Heart right ventricle (tissue), 16 donors: ENCODE measurements at regions of chr3 and their contacts with region 1.

Region 1: GRCh38 chr3:183766745-183767606 is 58.4 kb downstream of the MAP6D1 start:
- DNase-seq: peak; percentile 42 to 77
- ATAC-seq: peak; percentile 77 to 94 (median 92)
- H3K4me3 ChIP-seq: no peak overlapping the region
- H3K27ac ChIP-seq: peak overlapping the region in 1 of 10 donors; percentile 7
- H3K4me1 ChIP-seq: peaks cover 0 to 19% (median 7%) of the 10 kb centered on the region in 9 donors
- H3K27me3 ChIP-seq: no peaks in the 10 kb centered on the region
- CTCF ChIP-seq: peak; percentile 67 to 92 (median 84)

Region 2: DNA sequence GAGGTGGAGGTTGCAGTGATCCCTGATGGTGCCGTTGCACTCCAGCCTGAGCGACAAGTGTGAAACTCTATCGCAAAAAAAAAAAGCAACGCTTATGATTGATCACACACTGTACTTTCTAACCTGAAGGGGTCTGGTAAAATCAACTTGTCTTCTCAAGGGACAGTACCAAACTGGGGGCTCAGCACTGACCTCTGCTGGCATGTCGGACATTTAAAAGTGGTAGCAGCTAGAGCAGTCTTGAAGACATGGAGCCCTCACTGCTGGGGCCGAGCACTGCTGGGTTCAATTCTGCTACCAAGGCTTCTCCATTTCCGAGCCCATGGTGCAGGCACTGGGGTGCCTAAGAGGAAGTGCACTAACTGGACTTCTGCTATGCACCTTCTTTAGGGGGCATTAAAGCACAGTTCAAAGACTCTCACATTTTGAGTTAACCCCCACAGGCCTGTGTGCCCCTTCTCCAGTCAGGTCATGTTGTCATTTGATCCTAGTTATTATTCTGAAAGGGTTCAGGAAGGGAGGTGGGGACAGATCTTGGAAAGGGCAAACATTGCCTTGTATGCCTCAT is 578.0 kb before region 1 on chr3:
- intact Hi-C with region 1: loop called in 1 of 10 experiments (anchors 10 kb)
- DNase-seq: peak in 1 of 2 donors; percentile 44
- ATAC-seq: peak in 5 of 8 donors; percentile 27 to 59 (median 41)
- H3K4me3 ChIP-seq: no peak overlapping the region
- H3K27ac ChIP-seq: no peak overlapping the region
- H3K4me1 ChIP-seq: peaks cover 0 to 20% (median 0%) of the 10 kb centered on the region in 9 donors
- H3K27me3 ChIP-seq: peaks cover 0 to 4% (median 0%) of the 10 kb centered on the region in 7 donors
- CTCF ChIP-seq: peak in 7 of 9 donors; percentile 29 to 60 (median 43)

Region 3: DNA sequence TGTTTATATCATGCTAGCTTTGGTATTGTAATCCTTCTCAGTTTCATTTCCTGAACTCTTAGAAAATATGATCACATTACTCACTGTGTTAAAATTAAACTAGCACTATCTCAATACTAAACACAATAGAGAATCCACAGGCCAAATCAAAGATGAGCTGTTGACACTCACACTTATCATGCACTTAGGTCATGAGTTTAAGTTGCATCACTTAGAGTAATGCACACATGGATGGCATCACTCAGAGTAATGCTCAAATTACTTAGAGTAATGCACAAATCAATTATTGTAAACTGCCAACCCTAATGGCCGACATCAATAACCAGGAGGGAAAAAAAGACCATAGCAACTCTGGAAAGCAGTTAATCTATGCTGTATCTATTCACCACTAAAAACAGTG is 298.6 kb before region 1 on chr3:
- intact Hi-C with region 1: loop called (anchors 1 to 5 kb)
- DNase-seq: no peak
- ATAC-seq: peak in 1 of 8 donors; percentile 45
- H3K4me3 ChIP-seq: no peak overlapping the region
- H3K27ac ChIP-seq: no peak overlapping the region
- H3K4me1 ChIP-seq: peaks cover 0 to 15% (median 3%) of the 10 kb centered on the region in 9 donors
- H3K27me3 ChIP-seq: no peaks in the 10 kb centered on the region
- CTCF ChIP-seq: no peak

Region 4: GRCh38 chr3:183490670-183491069 is 276.3 kb before region 1 on chr3:
- intact Hi-C with region 1: loop called in 1 of 10 experiments (anchors 10 kb)
- DNase-seq: no peak
- ATAC-seq: peak in 1 of 8 donors; percentile 52
- H3K4me3 ChIP-seq: no peak overlapping the region
- H3K27ac ChIP-seq: peak overlapping the region in 1 of 10 donors; percentile 20
- H3K4me1 ChIP-seq: peaks cover 0 to 19% (median 12%) of the 10 kb centered on the region in 9 donors
- H3K27me3 ChIP-seq: no peaks in the 10 kb centered on the region
- CTCF ChIP-seq: no peak

Region 5: DNA sequence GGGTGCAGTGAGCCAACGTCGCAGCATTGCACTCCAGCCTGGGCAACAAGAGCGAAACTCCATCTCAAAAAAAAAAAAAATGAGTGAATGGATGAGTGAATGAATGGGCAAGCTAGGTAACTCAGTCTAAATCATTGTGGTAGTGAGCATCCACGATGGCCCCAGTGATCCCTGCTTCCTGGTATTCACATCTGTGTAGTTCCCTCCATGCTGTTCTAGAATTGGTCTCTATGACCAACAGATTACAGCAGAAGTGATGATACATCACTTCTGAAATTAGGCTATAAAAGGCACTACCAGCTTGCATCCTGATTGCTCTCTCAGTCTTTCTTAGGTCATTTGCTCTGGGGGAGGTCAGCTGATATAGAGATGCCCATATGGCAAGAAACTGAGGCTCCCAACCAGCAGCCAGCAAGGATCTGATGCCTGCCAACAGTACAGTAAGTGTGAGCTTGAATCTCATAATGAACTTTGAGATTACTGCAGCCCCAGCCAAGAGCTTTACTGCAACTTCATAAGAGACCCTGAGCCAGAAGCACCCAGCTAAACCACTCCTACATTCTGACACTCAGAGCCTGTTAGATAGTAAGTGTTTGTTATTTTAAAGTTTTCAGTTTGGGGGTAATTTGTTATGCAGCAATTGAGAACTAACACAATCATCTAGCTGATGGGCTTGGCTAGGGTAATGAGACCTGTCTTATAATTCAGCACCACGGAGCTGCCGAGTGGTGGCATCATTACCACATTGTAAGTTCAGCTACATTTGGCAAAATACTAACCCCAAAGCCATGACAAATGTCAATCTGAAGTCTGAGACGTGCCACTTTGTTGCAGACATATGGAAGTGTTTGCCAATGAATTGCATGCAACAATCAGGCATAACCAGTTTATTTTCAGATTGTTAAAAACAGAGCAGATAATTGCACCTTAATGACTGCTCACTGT is 264.5 kb before region 1 on chr3:
- intact Hi-C with region 1: loop called in 9 of 10 experiments (anchors 1 to 10 kb)
- DNase-seq: no peak
- ATAC-seq: peak; percentile 40 to 84 (median 78)
- H3K4me3 ChIP-seq: no peak overlapping the region
- H3K27ac ChIP-seq: no peak overlapping the region
- H3K4me1 ChIP-seq: peaks cover 0 to 5% (median 0%) of the 10 kb centered on the region in 9 donors
- H3K27me3 ChIP-seq: no peaks in the 10 kb centered on the region
- CTCF ChIP-seq: peak in 8 of 9 donors; percentile 26 to 63 (median 44)

Region 6: GRCh38 chr3:183697610-183698317 is 69.2 kb before region 1 on chr3 and contains the start of gene YEATS2:
- intact Hi-C with region 1: loop called in 1 of 10 experiments (anchors 10 kb)
- DNase-seq: peak; percentile 42 to 68
- ATAC-seq: peak; percentile 76 to 94 (median 88)
- H3K4me3 ChIP-seq: peak within 1 kb of the TSS; percentile 74 to 100 (median 98)
- H3K27ac ChIP-seq: peak within 1 kb of the TSS; percentile 75 to 98 (median 94)
- H3K4me1 ChIP-seq: peaks cover 0 to 35% (median 21%) of the 10 kb centered on the region in 9 donors
- H3K27me3 ChIP-seq: no peaks in the 10 kb centered on the region
- CTCF ChIP-seq: no peak
- total RNA-seq, gene YEATS2: 8.0 to 22.2 (median 10.5) TPM

Region 7: DNA sequence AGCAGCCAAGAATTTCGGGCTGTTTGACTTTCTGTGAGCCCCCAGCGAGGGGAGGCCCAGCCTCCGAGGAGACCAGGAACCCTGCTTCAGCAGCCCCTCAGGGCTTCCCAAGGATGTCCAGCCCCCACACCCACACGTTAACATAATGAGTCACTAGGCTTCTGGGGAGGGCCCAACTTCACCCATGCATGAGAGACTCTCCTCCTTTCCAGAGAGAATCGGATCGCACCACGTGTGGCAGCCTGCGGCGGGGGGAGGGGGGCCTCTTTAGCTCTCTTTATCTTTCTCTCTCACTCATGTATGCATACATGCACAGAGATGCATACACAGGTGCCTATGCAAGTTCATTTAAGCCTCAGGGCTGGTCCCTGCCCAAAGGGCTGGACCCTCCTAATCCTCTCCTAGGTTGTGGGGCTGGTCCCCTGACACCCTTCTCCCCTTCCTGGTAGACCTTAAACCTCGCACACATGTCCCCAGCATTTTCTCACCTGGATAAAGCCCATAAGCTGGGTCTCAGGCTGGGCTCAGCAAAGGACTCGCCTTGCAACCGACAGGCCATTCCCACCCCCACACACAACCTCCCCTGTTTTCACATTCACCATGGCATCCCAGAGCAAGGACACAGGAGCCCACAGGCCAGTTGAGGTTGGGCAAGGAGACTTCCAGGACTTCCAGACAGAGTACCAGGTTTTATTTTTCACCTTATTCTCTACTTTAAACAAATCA is 404.7 kb after region 1 on chr3:
- intact Hi-C with region 1: no loop called
- DNase-seq: no peak
- ATAC-seq: no peak
- H3K4me3 ChIP-seq: no peak overlapping the region
- H3K27ac ChIP-seq: no peak overlapping the region
- H3K4me1 ChIP-seq: peaks cover 2 to 32% (median 23%) of the 10 kb centered on the region in 9 donors
- H3K27me3 ChIP-seq: no peaks in the 10 kb centered on the region
- CTCF ChIP-seq: no peak